Breast epithelium (tissue), 4 donors: ENCODE measurements at regions of chr21 and their contacts with region 1.

Region 1: DNA sequence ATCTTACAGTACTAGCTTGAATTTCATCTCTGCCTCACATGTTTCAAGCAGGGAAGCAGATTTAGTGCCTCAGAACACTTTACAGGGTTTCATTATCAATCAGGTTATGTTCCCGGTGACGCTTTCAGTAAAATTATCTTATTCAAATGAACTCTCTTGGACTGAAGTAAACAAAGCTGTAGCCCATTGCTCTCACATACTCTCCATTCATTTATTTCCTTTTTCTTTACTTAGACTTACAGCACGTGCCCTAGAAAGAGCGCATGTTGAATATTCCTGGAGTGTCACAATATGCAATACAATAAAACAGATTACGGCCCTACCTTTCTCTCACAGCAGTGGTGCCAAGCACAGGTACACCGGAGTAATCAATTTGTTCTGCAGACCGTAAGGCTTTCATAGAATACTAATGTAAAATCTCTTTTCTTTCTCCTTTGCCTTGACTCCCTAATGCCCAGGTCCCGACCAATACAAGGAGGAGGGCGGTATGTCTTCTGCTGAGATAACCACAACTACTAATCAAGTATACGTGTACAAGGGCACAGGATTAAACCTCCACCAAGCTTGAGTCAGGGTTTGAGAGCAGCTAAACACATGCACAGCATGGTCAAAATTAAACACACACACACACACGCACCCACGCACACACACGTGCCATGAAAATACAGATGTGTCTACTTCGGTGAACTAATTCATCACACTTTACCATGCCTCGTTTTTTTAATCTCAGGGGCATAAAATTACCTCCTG is 62.8 kb downstream of the NRIP1 start:
- DNase-seq: no peak
- H3K4me3 ChIP-seq: no peak overlapping the region
- H3K27ac ChIP-seq: no peak overlapping the region
- H3K4me1 ChIP-seq: peaks cover 5 to 6% of the 10 kb centered on the region in 2 donors
- H3K27me3 ChIP-seq: no peaks in the 10 kb centered on the region
- CTCF ChIP-seq: no peak
- POLR2A ChIP-seq: no peak

Region 2: GRCh38 chr21:15472108-15473040 is 470.3 kb after region 1 on chr21:
- intact Hi-C with region 1: loop called (anchors 5 kb)
- DNase-seq: no peak
- H3K4me3 ChIP-seq: no peak overlapping the region
- H3K27ac ChIP-seq: no peak overlapping the region
- H3K4me1 ChIP-seq: no peaks in the 10 kb centered on the region
- H3K27me3 ChIP-seq: no peaks in the 10 kb centered on the region
- CTCF ChIP-seq: no peak
- POLR2A ChIP-seq: no peak